ENCODE measurements at regions of chr17 and their contacts with region 1.

Region 1: DNA sequence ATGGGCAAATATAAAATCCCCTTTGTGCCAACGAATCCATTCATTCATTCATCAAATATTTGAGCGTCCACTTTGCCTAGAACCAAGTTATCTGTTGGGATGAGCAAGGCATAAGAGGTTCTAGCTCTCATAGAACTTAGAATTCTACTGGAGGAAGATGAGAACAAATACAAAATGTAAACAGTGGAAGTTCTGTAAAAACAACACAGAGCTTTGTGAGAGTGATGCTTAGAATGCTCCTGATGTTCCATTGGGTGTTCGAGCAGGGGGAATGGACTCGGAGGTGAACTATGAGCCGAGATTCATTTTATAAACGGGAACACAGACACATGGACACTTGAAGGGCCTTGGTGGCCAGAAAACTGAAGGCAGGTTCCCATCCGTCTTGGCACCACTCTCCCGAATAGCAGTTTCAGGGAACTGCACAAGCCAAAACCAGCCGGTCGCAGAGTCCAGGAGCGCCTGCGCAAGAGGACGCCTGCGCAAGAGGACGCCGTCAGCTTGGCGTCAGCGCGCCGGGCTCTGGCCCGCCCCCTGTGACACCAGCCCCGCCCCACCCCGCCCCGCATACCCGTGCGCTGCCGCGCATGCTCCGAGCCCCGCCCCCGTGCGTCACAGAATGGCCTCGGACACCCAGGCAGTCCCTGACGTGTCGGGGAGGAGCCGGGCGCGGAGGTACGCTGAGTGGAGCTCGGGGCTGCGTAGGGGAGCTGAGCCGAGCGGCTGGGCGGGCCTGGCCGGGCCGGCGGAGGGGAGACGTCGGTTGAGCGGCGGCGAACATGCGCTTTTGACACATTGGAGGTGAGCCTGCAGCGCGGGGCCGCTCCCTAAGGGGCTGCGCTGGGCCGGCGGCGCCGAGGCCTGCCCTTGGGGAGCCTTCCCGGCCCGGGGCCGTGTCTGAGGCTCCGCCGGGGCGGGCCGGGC is at the start of gene NDEL1:
- DNase-seq: peak; percentile 98 to 99 (median 98)
- H3K4me3 ChIP-seq: peak within 1 kb of the TSS; percentile 87 to 95
- H3K4me3 Mint-ChIP-seq: peak within 1 kb of the TSS; percentile 94 to 99 (median 98)
- H3K27ac ChIP-seq: peak within 1 kb of the TSS; percentile 100
- H3K27ac Mint-ChIP-seq: peak within 1 kb of the TSS; percentile 96 to 100 (median 99)
- H3K4me1 ChIP-seq: peaks cover 40% of the 10 kb centered on the region
- H3K4me1 Mint-ChIP-seq: peaks cover 19 to 49% (median 31%) of the 10 kb centered on the region in 4 donors
- H3K27me3 ChIP-seq: no peaks in the 10 kb centered on the region
- H3K27me3 Mint-ChIP-seq: no peaks in the 10 kb centered on the region
- total RNA-seq, gene NDEL1: 115 to 120 TPM

Region 2: GRCh38 chr17:8268550-8269298 is 166.8 kb before region 1 on chr17:
- CTCF ChIA-PET with region 1: no interaction called
- POLR2A ChIA-PET with region 1: no interaction called
- intact Hi-C with region 1: no loop called
- DNase-seq: no peak
- H3K4me3 ChIP-seq: no peak overlapping the region
- H3K4me3 Mint-ChIP-seq: no peak overlapping the region
- H3K27ac ChIP-seq: no peak overlapping the region
- H3K27ac Mint-ChIP-seq: no peak overlapping the region
- H3K4me1 ChIP-seq: no peaks in the 10 kb centered on the region
- H3K4me1 Mint-ChIP-seq: no peaks in the 10 kb centered on the region
- H3K27me3 ChIP-seq: no peaks in the 10 kb centered on the region
- H3K27me3 Mint-ChIP-seq: no peaks in the 10 kb centered on the region

Region 3: DNA sequence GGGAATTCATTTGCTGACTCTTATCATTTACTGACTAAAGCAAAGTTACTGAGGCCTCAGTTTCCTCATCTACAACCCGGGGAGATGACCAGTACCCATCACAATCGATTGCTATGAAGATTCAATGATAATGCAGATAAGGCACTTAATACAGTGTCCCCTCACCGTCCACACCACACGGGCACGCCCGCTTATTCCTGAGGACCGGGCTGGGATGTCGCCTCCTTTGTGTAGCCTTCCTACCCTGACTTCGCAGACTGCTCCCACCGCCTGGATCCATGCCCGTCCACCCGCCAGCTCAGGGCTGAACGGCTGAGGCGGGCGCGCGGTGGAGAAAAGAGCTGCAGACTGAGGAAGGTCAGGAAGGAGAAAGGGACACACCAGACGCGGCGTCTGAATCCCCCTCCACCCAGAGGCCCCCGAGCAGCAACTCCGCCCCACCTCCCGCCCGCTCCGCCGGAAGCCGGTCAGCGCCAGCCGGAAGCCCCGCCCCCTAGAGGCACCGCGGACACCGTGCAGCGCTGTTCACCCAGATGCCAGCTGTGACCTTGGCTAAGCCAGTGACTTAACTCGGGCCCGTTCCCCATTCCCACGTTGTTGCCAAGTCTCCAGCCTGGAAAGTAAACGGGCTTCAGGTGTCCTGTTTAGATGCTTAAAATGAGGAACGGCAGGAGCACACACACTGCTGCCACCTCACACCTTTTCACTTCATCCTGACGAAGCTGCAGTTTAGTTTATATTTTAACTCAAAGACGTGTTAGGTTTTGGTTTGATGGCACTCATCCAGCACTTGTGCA is 59.0 kb before region 1 on chr17 and contains the start of gene KRABD2:
- CTCF ChIA-PET with region 1: no interaction called
- POLR2A ChIA-PET with region 1: interaction called, 11 read pairs
- intact Hi-C with region 1: no loop called
- DNase-seq: peak; percentile 84 to 91 (median 86)
- H3K4me3 ChIP-seq: peak within 1 kb of the TSS; percentile 86 to 97
- H3K4me3 Mint-ChIP-seq: peak within 1 kb of the TSS; percentile 88 to 91 (median 90)
- H3K27ac ChIP-seq: peak within 1 kb of the TSS; percentile 85
- H3K27ac Mint-ChIP-seq: peak within 1 kb of the TSS; percentile 87 to 93 (median 92)
- H3K4me1 ChIP-seq: peaks cover 43% of the 10 kb centered on the region
- H3K4me1 Mint-ChIP-seq: peaks cover 28 to 66% (median 47%) of the 10 kb centered on the region in 4 donors
- H3K27me3 ChIP-seq: no peaks in the 10 kb centered on the region
- H3K27me3 Mint-ChIP-seq: no peaks in the 10 kb centered on the region

Region 4: DNA sequence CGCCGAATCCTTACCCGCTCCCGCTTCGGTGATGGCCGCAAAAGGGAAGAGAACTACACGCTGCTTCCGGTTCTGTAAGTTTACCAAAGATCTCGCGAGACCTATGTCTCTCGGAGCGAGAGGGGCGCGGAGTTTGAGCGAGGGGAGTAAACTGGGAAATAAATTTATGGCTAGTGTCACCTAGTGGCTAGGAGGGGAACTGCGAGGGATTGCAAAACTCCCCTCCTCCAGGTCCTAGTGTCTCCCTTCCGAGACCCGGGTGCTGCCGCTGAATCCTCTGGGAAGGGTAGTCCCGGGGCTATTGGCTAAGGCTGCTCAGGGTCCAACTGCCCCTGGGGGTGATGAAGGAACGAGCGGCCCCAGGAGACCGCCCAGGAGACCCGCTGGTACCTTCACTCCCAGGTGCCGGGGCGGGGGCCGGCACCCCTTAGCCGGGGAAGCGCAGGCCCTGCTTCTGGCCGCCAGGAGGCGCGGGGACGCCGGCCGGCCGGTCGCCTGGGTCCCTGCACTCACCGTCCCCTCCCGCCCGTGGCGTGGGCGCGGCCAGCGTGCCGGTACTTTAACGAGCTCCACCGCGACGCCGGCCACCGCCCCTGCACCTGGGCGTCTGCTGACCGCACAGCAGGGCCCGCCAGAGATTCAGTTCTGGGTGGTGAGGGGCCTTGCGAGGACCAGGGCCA is 52.2 kb before region 1 on chr17 and contains the start of gene RPL26:
- CTCF ChIA-PET with region 1: interaction called, 5 read pairs
- POLR2A ChIA-PET with region 1: interaction called, 11 read pairs
- intact Hi-C with region 1: loop called (anchors 1 kb)
- DNase-seq: peak; percentile 96 to 98 (median 97)
- H3K4me3 ChIP-seq: peak within 1 kb of the TSS; percentile 74 to 95
- H3K4me3 Mint-ChIP-seq: peak within 1 kb of the TSS; percentile 95 to 99 (median 97)
- H3K27ac ChIP-seq: peak within 1 kb of the TSS; percentile 77
- H3K27ac Mint-ChIP-seq: peak within 1 kb of the TSS; percentile 94 to 97 (median 96)
- H3K4me1 ChIP-seq: peaks cover 49% of the 10 kb centered on the region
- H3K4me1 Mint-ChIP-seq: peaks cover 36 to 82% (median 54%) of the 10 kb centered on the region in 4 donors
- H3K27me3 ChIP-seq: no peaks in the 10 kb centered on the region
- H3K27me3 Mint-ChIP-seq: no peaks in the 10 kb centered on the region
- total RNA-seq, gene RPL26: 2,761 to 2,878 TPM

Region 5: GRCh38 chr17:8409966-8410864 is 25.3 kb before region 1 on chr17:
- CTCF ChIA-PET with region 1: interaction called, 18 read pairs
- POLR2A ChIA-PET with region 1: interaction called, 6 read pairs
- intact Hi-C with region 1: no loop called
- DNase-seq: peak; percentile 69 to 73 (median 71)
- H3K4me3 ChIP-seq: no peak overlapping the region
- H3K4me3 Mint-ChIP-seq: peak overlapping the region in 2 of 8 donors; percentile 3 to 57
- H3K27ac ChIP-seq: no peak overlapping the region
- H3K27ac Mint-ChIP-seq: peak overlapping the region in 1 of 7 donors; percentile 57
- H3K4me1 ChIP-seq: peaks cover 20% of the 10 kb centered on the region
- H3K4me1 Mint-ChIP-seq: peaks cover 11 to 22% (median 15%) of the 10 kb centered on the region in 4 donors
- H3K27me3 ChIP-seq: no peaks in the 10 kb centered on the region
- H3K27me3 Mint-ChIP-seq: peaks cover 7 to 8% of the 10 kb centered on the region in 2 donors

Region 6: DNA sequence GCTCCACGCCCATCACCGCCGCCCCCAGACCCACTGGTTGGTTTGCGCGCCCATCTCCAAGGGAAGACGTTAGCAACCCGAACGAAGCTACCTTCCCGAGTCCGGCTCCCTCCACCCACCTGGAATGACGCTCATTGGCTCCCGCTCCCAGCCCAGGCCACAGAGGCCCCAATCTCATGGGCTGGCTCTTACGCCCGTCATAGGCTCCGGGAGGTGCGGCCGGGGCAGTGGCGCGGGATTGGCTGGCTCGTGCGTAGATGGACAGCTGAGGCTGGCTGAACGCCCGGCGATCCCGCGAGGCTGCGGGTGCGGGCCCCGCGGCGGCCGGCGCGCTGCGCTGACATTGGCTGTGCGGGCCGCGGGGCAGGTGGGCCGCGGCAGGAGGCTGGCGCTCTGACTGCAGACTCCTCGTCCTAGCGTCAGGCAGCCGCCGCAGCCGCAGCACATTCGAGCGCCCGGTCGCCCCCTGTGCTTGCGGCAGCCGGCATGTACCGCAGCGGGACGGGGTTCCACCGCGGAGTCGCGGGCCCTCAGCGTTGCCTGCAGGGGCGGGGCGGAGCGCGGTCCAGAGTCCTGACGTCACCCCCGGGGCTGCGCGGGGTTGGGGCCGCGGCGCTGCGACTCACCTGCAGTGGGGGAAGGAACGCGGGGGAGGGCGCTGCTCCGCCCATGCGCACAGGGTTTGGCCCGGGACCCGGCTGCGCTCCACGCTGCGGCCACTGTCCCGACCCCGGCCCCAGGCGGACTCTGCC is 195.5 kb after region 1 on chr17:
- CTCF ChIA-PET with region 1: no interaction called
- POLR2A ChIA-PET with region 1: interaction called, 6 read pairs
- intact Hi-C with region 1: loop called (anchors 10 kb)
- DNase-seq: peak; percentile 80 to 87 (median 82)
- H3K4me3 ChIP-seq: peak overlapping the region; percentile 42 to 72
- H3K4me3 Mint-ChIP-seq: peak overlapping the region; percentile 95 to 100 (median 98)
- H3K27ac ChIP-seq: peak overlapping the region; percentile 37
- H3K27ac Mint-ChIP-seq: peak overlapping the region; percentile 76 to 97 (median 86)
- H3K4me1 ChIP-seq: peaks cover 13% of the 10 kb centered on the region
- H3K4me1 Mint-ChIP-seq: peaks cover 4 to 20% (median 10%) of the 10 kb centered on the region in 4 donors
- H3K27me3 ChIP-seq: peaks cover 17% of the 10 kb centered on the region
- H3K27me3 Mint-ChIP-seq: peaks cover 28 to 38% of the 10 kb centered on the region in 2 donors

Region 7: GRCh38 chr17:8740486-8740885 is 305.0 kb after region 1 on chr17:
- CTCF ChIA-PET with region 1: interaction called, 12 read pairs
- POLR2A ChIA-PET with region 1: interaction called, 4 read pairs
- intact Hi-C with region 1: loop called (anchors 1 kb)
- DNase-seq: peak; percentile 26 to 78 (median 38)
- H3K4me3 ChIP-seq: peak overlapping the region; percentile 34 to 40
- H3K4me3 Mint-ChIP-seq: peak overlapping the region; percentile 76 to 91 (median 85)
- H3K27ac ChIP-seq: peak overlapping the region; percentile 20
- H3K27ac Mint-ChIP-seq: peak overlapping the region in 6 of 7 donors; percentile 42 to 90 (median 66)
- H3K4me1 ChIP-seq: peaks cover 20% of the 10 kb centered on the region
- H3K4me1 Mint-ChIP-seq: peaks cover 9 to 28% (median 16%) of the 10 kb centered on the region in 4 donors
- H3K27me3 ChIP-seq: no peaks in the 10 kb centered on the region
- H3K27me3 Mint-ChIP-seq: no peaks in the 10 kb centered on the region